Naive thymus-derived CD4-positive, alpha-beta T cell (primary cell): ENCODE measurements at regions of chr6 and their contacts with region 1.

Region 1: DNA sequence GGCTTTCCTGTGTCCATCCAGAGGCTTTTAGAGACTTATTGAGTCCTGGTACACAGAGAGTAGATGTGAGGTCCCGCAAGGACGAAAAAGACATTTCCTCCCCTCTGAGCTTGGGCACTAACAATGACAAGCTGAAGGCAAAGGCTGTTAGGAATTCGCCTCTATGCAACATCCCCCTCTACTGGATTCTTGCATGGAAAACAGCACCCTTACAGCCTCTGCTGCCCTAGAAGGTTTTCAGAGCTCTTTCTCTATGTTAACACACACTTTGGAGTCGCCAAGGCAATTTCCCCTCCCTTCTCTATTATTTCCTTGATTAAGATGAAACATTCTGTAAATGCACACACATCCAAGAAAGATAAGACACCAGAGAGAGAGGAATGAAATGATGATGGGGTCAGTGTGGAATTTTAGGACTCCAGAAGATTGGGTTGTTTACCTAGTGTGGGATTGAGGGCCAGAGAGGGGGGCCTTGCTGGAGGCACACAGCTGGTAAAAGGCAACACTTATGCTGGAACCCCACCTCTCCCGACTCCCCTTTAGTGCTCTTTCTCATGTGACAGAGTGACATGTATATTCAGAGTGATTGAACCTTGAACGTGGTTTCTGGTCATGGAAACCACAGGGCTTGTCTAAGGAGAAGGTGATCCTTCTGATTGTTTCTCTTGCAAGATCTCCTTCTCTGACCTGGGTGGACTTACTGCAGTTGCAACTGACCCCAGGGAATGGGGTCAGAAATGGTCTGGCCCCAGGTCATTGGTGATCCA is 300.7 kb downstream of the CLIC5 start:
- DNase-seq: peak in 7 of 9 donors; percentile 51 to 74 (median 68)
- ATAC-seq: peak; percentile 84
- H3K4me3 ChIP-seq: no peak overlapping the region
- H3K4me3 Mint-ChIP-seq: peak overlapping the region in 5 of 10 donors; percentile 16 to 64 (median 47)
- H3K27ac ChIP-seq: no peak overlapping the region
- H3K27ac Mint-ChIP-seq: peak overlapping the region in 3 of 9 donors; percentile 32 to 75 (median 70)
- H3K4me1 ChIP-seq: no peaks in the 10 kb centered on the region
- H3K4me1 Mint-ChIP-seq: peaks cover 8 to 46% (median 12%) of the 10 kb centered on the region in 7 donors
- H3K27me3 ChIP-seq: no peaks in the 10 kb centered on the region
- H3K27me3 Mint-ChIP-seq: no peaks in the 10 kb centered on the region

Region 2: DNA sequence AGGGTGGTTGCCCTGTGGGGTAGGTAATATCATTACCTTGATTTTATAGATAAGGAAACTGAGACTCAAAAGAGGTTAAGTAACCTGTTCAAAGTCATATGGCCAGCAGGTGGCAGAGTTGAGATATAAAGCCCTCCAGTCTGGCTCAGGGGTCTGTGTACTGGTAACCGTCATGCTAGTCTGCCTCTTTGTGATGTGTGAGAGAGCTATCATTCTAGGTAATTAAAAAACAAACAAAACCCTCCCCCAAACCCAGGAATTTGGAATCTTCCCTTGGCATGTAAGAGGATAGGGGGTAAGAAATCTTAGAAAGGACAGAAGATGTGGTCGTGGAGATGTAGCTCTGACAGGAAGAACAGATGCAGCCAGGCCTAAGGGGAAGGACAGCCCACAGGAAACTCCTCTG is 1121.4 kb before region 1 on chr6:
- CTCF ChIA-PET with region 1: interaction called, 3 read pairs
- POLR2A ChIA-PET with region 1: no interaction called
- intact Hi-C with region 1: loop called in 1 of 2 experiments (anchors 1 kb)
- DNase-seq: peak in 8 of 9 donors; percentile 8 to 48 (median 36)
- ATAC-seq: peak; percentile 63
- H3K4me3 ChIP-seq: no peak overlapping the region
- H3K4me3 Mint-ChIP-seq: no peak overlapping the region
- H3K27ac ChIP-seq: no peak overlapping the region
- H3K27ac Mint-ChIP-seq: peak overlapping the region in 1 of 9 donors; percentile 59
- H3K4me1 ChIP-seq: no peaks in the 10 kb centered on the region
- H3K4me1 Mint-ChIP-seq: peaks cover 0 to 9% (median 0%) of the 10 kb centered on the region in 7 donors
- H3K27me3 ChIP-seq: no peaks in the 10 kb centered on the region
- H3K27me3 Mint-ChIP-seq: peaks cover 11 to 20% (median 14%) of the 10 kb centered on the region in 5 donors

Region 3: DNA sequence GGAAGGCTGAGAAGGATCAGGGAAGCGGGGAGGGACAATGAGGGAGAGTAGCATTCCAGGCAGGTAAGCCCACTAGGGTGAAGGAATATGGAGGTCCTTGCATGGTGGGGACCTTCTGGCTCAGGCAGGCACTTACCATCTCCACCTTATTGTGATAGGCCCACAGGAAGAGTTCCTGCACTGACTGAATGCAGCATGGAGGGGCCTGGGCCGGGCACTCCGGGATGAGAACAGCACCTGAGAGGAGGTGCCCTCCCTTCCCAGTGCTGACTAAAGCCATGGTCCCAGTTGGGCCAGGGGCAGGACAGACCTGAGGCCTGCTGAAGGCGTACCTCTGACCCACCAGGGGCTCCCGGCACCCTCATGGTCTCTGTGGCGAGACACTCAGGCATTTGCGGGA is 934.8 kb before region 1 on chr6:
- CTCF ChIA-PET with region 1: no interaction called
- POLR2A ChIA-PET with region 1: no interaction called
- intact Hi-C with region 1: loop called in 1 of 2 experiments (anchors 1 kb)
- DNase-seq: no peak
- ATAC-seq: no peak
- H3K4me3 ChIP-seq: no peak overlapping the region
- H3K4me3 Mint-ChIP-seq: no peak overlapping the region
- H3K27ac ChIP-seq: no peak overlapping the region
- H3K27ac Mint-ChIP-seq: no peak overlapping the region
- H3K4me1 ChIP-seq: no peaks in the 10 kb centered on the region
- H3K4me1 Mint-ChIP-seq: no peaks in the 10 kb centered on the region
- H3K27me3 ChIP-seq: no peaks in the 10 kb centered on the region
- H3K27me3 Mint-ChIP-seq: no peaks in the 10 kb centered on the region

Region 4: DNA sequence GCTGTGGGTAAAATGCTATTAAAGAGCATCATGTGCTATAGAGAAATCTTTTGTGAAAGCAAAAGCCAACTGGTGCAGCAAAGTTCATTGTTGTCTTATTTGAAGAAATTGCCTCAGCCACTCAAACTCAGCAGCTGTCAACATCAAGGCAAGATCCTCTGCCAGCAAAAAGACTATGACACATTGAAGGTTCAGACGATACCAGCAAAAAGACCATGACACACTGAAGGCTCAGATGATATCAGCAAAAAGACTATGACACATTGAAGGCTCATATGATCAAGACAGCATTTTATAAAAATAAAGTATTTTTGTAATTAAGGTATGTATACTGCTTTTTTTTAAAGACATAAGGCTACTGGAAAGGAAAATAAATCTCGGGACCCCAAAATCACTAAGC is 505.2 kb before region 1 on chr6:
- CTCF ChIA-PET with region 1: interaction called, 3 read pairs
- POLR2A ChIA-PET with region 1: no interaction called
- intact Hi-C with region 1: loop called in 1 of 2 experiments (anchors 10 kb)
- DNase-seq: no peak
- ATAC-seq: no peak
- H3K4me3 ChIP-seq: no peak overlapping the region
- H3K4me3 Mint-ChIP-seq: no peak overlapping the region
- H3K27ac ChIP-seq: no peak overlapping the region
- H3K27ac Mint-ChIP-seq: no peak overlapping the region
- H3K4me1 ChIP-seq: no peaks in the 10 kb centered on the region
- H3K4me1 Mint-ChIP-seq: peaks cover 5 to 18% (median 5%) of the 10 kb centered on the region in 7 donors
- H3K27me3 ChIP-seq: no peaks in the 10 kb centered on the region
- H3K27me3 Mint-ChIP-seq: no peaks in the 10 kb centered on the region

Region 5: GRCh38 chr6:45377554-45378333 is 337.2 kb before region 1 on chr6 and contains the start of gene SUPT3H:
- CTCF ChIA-PET with region 1: interaction called, 4 read pairs
- POLR2A ChIA-PET with region 1: interaction called, 8 read pairs
- intact Hi-C with region 1: loop called (anchors 1 to 2 kb)
- DNase-seq: peak; percentile 87 to 96 (median 89)
- ATAC-seq: peak; percentile 90
- H3K4me3 ChIP-seq: peak within 1 kb of the TSS; percentile 75
- H3K4me3 Mint-ChIP-seq: peak within 1 kb of the TSS; percentile 89 to 100 (median 98)
- H3K27ac ChIP-seq: peak within 1 kb of the TSS; percentile 86
- H3K27ac Mint-ChIP-seq: peak within 1 kb of the TSS; percentile 96 to 100 (median 98)
- H3K4me1 ChIP-seq: peaks cover 0 to 14% of the 10 kb centered on the region in 2 donors
- H3K4me1 Mint-ChIP-seq: peaks cover 14 to 35% (median 28%) of the 10 kb centered on the region in 7 donors
- H3K27me3 ChIP-seq: no peaks in the 10 kb centered on the region
- H3K27me3 Mint-ChIP-seq: no peaks in the 10 kb centered on the region
- total RNA-seq, gene SUPT3H: 10.0 to 16.0 (median 12.7) TPM

Region 6: DNA sequence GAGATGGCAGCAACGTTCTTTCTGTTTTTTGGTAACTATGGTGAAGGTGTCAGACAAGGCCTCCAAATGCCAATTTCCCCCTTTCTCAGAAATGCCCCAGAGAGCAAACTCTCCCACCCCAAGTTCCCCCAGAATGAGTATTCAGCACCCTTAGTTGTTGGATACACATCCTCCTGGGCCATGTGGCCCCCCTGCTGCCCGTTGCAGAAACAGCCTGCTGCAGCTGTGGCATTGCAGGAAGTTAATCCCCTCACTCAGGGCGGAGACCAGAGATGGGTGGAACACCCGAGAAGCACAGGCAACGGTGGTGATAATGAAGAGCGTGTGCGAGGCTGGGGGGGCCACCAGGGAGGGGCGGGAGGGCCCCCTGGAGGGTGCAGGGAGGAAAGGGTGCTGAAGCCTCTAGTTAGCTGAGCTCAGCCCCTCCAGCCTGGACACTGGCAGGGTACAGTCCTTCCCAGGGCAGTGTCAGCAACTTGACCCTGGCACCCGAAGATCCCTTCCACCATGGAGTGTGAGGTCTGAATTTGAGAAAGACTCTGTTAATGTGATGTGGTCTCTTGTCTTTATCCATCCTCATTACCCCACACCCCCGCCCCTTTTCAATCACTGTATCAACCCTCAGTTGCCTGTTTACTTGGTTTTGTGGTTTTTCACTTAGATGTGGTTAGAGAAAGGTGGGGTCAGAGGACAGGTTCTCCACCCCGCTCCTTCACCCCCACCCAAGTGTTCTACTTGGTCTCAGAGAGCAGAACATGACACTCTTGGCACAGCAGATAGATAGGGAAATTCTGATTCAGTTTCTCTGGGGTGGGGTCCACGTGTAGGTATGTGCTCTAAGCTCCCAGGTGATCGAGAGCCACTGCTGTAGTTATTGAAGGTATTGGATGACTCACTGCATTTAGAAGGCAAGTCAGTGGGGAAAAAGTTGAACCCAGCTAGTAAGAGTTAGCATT is 128.4 kb before region 1 on chr6:
- CTCF ChIA-PET with region 1: interaction called, 5 read pairs
- POLR2A ChIA-PET with region 1: interaction called, 3 read pairs
- intact Hi-C with region 1: loop called (anchors 1 to 2 kb)
- DNase-seq: peak; percentile 11 to 93 (median 86)
- ATAC-seq: peak; percentile 93
- H3K4me3 ChIP-seq: peak overlapping the region; percentile 4
- H3K4me3 Mint-ChIP-seq: peak overlapping the region; percentile 76 to 89 (median 81)
- H3K27ac ChIP-seq: peak overlapping the region; percentile 9
- H3K27ac Mint-ChIP-seq: peak overlapping the region; percentile 59 to 97 (median 89)
- H3K4me1 ChIP-seq: peaks cover 48 to 67% of the 10 kb centered on the region in 2 donors
- H3K4me1 Mint-ChIP-seq: peaks cover 40 to 70% (median 69%) of the 10 kb centered on the region in 7 donors
- H3K27me3 ChIP-seq: no peaks in the 10 kb centered on the region
- H3K27me3 Mint-ChIP-seq: no peaks in the 10 kb centered on the region

Region 7: GRCh38 chr6:45911691-45912090 is 196.8 kb after region 1 on chr6:
- CTCF ChIA-PET with region 1: no interaction called
- POLR2A ChIA-PET with region 1: no interaction called
- intact Hi-C with region 1: no loop called
- DNase-seq: no peak
- ATAC-seq: no peak
- H3K4me3 ChIP-seq: no peak overlapping the region
- H3K4me3 Mint-ChIP-seq: no peak overlapping the region
- H3K27ac ChIP-seq: no peak overlapping the region
- H3K27ac Mint-ChIP-seq: no peak overlapping the region
- H3K4me1 ChIP-seq: no peaks in the 10 kb centered on the region
- H3K4me1 Mint-ChIP-seq: peaks cover 0 to 2% (median 0%) of the 10 kb centered on the region in 7 donors
- H3K27me3 ChIP-seq: no peaks in the 10 kb centered on the region
- H3K27me3 Mint-ChIP-seq: no peaks in the 10 kb centered on the region